Mammary epithelial cell (primary cell): ENCODE measurements at regions of chr2 and their contacts with region 1.

Region 1: DNA sequence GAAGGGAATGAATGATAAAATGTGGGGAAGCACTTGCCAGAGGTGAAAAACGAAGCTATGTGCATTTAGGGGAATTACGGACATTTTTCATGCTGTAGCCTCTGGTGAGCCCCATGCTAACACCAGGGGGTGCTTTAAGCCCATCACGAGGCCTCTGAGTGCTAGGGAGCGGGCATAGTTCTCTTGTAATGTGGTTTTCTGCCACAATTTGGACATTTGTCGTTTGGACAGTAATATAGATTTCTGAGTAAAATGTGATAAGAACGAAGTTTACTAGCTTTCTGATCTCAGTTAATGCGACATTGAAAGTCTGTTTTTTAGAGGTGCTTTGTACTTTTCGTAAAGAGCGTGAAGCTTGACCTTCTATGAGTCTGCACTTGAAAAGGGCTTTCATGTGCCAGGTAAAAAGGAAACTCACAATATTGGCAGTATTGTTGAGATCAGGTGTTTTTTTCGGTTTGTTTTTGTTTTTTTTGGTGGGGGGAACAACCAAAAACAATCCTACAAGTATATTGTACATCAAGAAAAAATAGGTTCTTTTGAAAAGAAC is 50.6 kb downstream of the TRAF3IP1 start:
- DNase-seq: peak; percentile 51
- H3K4me3 ChIP-seq: no peak overlapping the region
- H3K27ac ChIP-seq: no peak overlapping the region
- H3K4me1 ChIP-seq: no peaks in the 10 kb centered on the region
- H3K27me3 ChIP-seq: no peaks in the 10 kb centered on the region
- CTCF ChIP-seq: peak; percentile 79 to 82

Region 2: GRCh38 chr2:238462782-238463396 is 92.0 kb after region 1 on chr2:
- CTCF ChIA-PET with region 1: interaction called, 3 read pairs
- dilution Hi-C with region 1: no loop called
- in situ Hi-C with region 1: no loop called
- intact Hi-C with region 1: loop called (anchors 1 kb)
- DNase-seq: peak; percentile 61
- H3K4me3 ChIP-seq: no peak overlapping the region
- H3K27ac ChIP-seq: no peak overlapping the region
- H3K4me1 ChIP-seq: peaks cover 16% of the 10 kb centered on the region
- H3K27me3 ChIP-seq: no peaks in the 10 kb centered on the region
- CTCF ChIP-seq: peak; percentile 73

Region 3: GRCh38 chr2:238615187-238615586 is 244.3 kb after region 1 on chr2:
- CTCF ChIA-PET with region 1: no interaction called
- dilution Hi-C with region 1: no loop called
- in situ Hi-C with region 1: no loop called
- intact Hi-C with region 1: loop called (anchors 1 kb)
- DNase-seq: no peak
- H3K4me3 ChIP-seq: no peak overlapping the region
- H3K27ac ChIP-seq: no peak overlapping the region
- H3K4me1 ChIP-seq: no peaks in the 10 kb centered on the region
- H3K27me3 ChIP-seq: no peaks in the 10 kb centered on the region
- CTCF ChIP-seq: no peak